ENCODE measurements at regions of chr4 and their contacts with region 1.

Region 1: DNA sequence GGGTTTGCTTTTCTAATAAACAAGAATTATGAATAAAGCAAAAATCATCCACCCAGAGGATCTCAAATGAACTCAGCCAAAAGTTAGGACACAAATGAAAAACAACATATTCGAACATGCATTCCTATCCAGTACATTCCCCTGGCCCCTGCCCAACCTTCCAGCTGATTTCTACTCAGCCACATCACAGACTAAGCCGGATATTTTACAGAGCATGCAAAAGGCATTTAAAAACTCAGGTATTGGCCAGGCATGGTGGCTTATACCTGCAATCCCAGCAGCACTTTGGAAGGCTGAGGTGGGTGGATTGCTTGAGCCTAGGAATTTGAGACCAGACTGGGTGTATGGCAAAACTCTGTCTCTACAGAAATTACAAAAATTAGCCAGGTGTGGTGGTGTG is 54.6 kb downstream of the RELL1 start:
- DNase-seq: peak; percentile 40
- H3K4me3 ChIP-seq: no peak overlapping the region
- H3K27ac ChIP-seq: no peak overlapping the region
- H3K4me1 ChIP-seq: no peaks in the 10 kb centered on the region
- H3K27me3 ChIP-seq: no peaks in the 10 kb centered on the region
- CTCF ChIP-seq: no peak
- POLR2A ChIP-seq: no peak

Region 2: DNA sequence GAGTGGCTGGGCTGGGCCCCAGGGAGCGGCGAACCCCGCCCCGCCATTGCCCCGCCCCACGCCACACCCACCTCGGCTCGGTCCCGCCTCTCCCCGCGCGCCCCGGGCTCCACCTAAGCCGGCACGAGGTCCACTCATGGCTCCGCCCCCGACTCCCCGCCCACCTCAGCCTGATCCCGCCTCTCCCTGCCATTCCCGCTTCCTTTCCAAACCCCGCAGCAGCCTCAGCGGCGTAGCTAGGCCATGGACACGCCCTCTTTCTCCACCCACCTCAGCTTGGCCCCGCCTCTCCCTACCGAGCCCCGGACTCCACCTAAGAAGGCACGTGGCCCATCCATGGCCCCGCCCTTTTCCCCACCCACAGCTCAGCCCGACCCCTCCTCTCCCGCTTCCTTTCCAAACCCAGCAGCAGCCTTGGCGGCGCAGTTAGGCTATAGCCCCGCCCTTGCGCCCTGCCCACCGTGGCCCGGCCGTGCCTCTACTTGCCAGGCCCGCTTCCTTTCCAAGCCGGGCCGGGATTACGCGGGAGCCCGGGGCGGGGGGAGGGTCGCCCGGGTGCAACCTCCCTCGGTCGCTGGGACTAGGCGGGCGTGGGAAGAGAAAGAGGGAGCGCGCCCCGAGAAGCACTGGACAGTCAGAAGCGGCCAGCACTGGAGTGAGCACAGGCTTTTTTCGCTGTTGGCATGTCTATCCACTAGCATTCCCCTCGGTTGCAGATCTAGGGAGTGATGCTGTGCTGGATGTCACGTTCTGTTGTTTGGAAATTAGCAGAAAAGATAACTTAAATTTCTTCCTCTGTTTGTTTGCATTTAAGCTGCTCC is 55.0 kb after region 1 on chr4 and contains the start of gene RELL1:
- intact Hi-C with region 1: loop called (anchors 5 kb)
- DNase-seq: peak; percentile 100
- H3K4me3 ChIP-seq: peak within 1 kb of the TSS; percentile 89 to 93
- H3K27ac ChIP-seq: peak within 1 kb of the TSS; percentile 90 to 92
- H3K4me1 ChIP-seq: no peaks in the 10 kb centered on the region
- H3K27me3 ChIP-seq: no peaks in the 10 kb centered on the region
- CTCF ChIP-seq: peak in 1 of 4 experiments; percentile 12
- POLR2A ChIP-seq: peak; percentile 26
- total RNA-seq, gene RELL1: 18.9 to 26.2 TPM

Region 3: DNA sequence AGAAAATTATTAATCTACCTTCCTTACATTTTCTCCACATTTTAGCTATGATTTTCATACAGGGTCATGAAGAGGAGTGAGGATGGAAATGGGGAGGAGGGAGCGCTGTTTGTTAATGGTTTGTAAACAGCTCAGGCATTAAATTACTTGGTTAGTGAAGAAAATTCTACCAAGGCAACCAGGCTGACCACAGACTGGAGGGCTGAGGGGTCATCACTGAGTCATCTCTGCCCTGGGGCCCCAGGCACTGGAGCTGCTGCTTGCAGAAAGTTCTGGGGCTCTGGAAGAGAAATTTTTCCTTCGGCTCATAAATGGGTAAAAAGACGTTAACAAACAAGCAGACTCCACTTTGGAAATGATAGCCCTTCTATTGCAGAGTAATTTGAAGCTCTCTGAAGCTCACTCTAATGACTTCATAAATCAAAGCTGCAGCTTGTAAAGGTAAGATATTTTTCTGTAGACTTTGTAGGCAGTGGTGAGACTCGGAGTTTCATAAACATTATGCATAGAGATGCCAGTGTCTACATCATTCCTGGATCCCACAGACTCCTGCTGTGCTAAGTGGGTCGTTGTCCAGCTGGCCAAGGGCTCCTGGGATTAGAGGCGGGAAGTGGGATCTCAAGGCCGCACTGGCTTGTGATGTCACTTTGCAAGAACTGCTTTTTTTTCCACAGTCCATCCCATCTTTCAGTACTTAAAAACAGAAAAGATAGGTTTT is 488.3 kb after region 1 on chr4:
- intact Hi-C with region 1: no loop called
- DNase-seq: no peak
- H3K4me3 ChIP-seq: no peak overlapping the region
- H3K27ac ChIP-seq: peak overlapping the region in 1 of 2 donors; percentile 17
- H3K4me1 ChIP-seq: peaks cover 6% of the 10 kb centered on the region
- H3K27me3 ChIP-seq: no peaks in the 10 kb centered on the region
- CTCF ChIP-seq: no peak
- POLR2A ChIP-seq: no peak